ENCODE measurements at regions of chr10 and their contacts with region 1.

Region 1: DNA sequence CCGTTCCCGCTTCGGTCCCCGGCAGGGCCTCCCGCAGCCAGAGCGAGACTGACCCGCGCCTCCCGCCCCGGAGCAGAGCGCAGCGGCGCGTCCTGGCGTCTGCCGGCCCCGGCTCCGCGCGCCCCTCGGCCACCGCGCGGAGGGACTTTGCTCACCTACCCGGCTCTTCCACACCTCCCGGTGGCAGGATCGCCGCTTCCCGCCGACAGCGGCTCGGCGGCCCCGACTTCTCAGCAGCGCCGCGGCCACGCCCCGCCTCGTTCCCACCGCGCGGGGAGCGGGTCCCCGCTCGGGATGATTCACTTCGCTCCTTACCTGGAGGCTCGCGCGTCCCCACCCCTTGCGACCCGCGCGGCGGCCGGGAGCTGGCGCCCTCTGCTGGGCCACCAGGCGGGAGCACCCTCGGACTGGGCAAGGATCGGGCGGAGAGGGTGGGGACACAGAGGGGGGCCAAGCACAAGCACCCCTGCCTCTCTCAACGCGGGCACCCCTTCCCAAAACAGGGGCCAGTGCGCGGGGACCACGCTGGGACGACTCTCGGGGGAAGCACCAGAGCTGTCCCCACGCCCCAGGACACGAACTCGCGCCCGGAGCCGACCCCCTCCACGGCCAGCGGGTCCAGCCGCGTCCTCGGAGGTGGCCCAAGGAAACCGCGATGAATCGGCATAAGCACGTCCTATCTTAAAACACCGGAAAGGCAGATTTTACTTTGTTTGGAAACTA is 101.0 kb upstream of the SVIL start:
- DNase-seq: peak; percentile 63 to 89 (median 80)
- ATAC-seq: peak; percentile 80
- H3K4me3 ChIP-seq: peak overlapping the region; percentile 73
- H3K4me3 Mint-ChIP-seq: peak overlapping the region; percentile 94
- H3K27ac ChIP-seq: peak overlapping the region in 1 of 2 donors; percentile 56
- H3K27ac Mint-ChIP-seq: peak overlapping the region; percentile 81
- H3K4me1 ChIP-seq: peaks cover 33% of the 10 kb centered on the region
- H3K4me1 Mint-ChIP-seq: peaks cover 43% of the 10 kb centered on the region
- H3K27me3 ChIP-seq: no peaks in the 10 kb centered on the region
- H3K27me3 Mint-ChIP-seq: no peaks in the 10 kb centered on the region
- CTCF ChIP-seq: peak; percentile 94

Region 2: GRCh38 chr10:29517352-29517923 is 218.3 kb before region 1 on chr10:
- CTCF ChIA-PET with region 1: no interaction called
- POLR2A ChIA-PET with region 1: no interaction called
- intact Hi-C with region 1: loop called in 1 of 2 experiments (anchors 10 kb)
- DNase-seq: no peak
- ATAC-seq: no peak
- H3K4me3 ChIP-seq: no peak overlapping the region
- H3K4me3 Mint-ChIP-seq: no peak overlapping the region
- H3K27ac ChIP-seq: no peak overlapping the region
- H3K27ac Mint-ChIP-seq: no peak overlapping the region
- H3K4me1 ChIP-seq: no peaks in the 10 kb centered on the region
- H3K4me1 Mint-ChIP-seq: peaks cover 4% of the 10 kb centered on the region
- H3K27me3 ChIP-seq: no peaks in the 10 kb centered on the region
- H3K27me3 Mint-ChIP-seq: no peaks in the 10 kb centered on the region
- CTCF ChIP-seq: no peak

Region 3: DNA sequence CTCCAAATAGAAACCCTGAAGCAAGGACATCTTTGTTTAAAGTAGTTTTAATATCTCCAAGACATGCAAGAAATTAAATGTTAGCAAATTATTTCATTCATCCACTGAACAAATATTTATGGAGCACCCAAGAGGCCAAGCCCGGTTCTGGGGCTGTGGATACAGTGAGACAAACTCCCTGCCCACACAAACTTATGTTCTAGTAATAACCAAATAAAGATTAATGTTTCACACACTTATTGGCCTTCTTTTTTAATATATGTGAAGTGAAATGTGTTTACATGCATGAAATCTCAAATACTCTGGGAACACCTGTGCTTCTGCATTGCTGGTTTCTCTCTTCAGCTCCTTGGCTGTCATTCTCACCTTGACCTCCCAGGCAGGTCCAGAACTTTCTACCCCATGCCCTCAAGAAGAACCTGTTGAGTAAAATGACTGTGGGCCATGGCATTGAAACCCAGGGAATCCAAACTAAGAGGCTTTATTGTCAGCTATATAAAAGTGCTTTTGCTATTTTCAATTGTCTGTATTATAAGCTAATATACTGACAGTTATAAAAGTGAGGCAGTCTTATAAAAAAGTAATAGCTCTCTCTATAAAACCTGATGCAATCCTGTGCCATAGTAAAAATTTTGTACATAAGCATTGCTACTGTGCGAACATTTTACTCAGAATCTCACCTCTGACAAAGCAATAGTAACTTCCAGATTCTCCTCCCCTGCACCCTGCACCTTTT is 144.7 kb before region 1 on chr10:
- CTCF ChIA-PET with region 1: interaction called, 10 read pairs
- POLR2A ChIA-PET with region 1: interaction called, 3 read pairs
- intact Hi-C with region 1: loop called (anchors 2 kb)
- DNase-seq: no peak
- ATAC-seq: no peak
- H3K4me3 ChIP-seq: no peak overlapping the region
- H3K4me3 Mint-ChIP-seq: no peak overlapping the region
- H3K27ac ChIP-seq: no peak overlapping the region
- H3K27ac Mint-ChIP-seq: no peak overlapping the region
- H3K4me1 ChIP-seq: peaks cover 7% of the 10 kb centered on the region
- H3K4me1 Mint-ChIP-seq: peaks cover 25% of the 10 kb centered on the region
- H3K27me3 ChIP-seq: no peaks in the 10 kb centered on the region
- H3K27me3 Mint-ChIP-seq: no peaks in the 10 kb centered on the region
- CTCF ChIP-seq: peak; percentile 46

Region 4: GRCh38 chr10:29658984-29659965 is 76.5 kb before region 1 on chr10:
- CTCF ChIA-PET with region 1: interaction called, 8 read pairs
- POLR2A ChIA-PET with region 1: no interaction called
- intact Hi-C with region 1: loop called (anchors 1 to 5 kb)
- DNase-seq: peak; percentile 26 to 95 (median 46)
- ATAC-seq: peak; percentile 94
- H3K4me3 ChIP-seq: peak overlapping the region; percentile 1
- H3K4me3 Mint-ChIP-seq: peak overlapping the region; percentile 70
- H3K27ac ChIP-seq: peak overlapping the region; percentile 55 to 56
- H3K27ac Mint-ChIP-seq: peak overlapping the region; percentile 89
- H3K4me1 ChIP-seq: peaks cover 29% of the 10 kb centered on the region
- H3K4me1 Mint-ChIP-seq: peaks cover 44% of the 10 kb centered on the region
- H3K27me3 ChIP-seq: no peaks in the 10 kb centered on the region
- H3K27me3 Mint-ChIP-seq: no peaks in the 10 kb centered on the region
- CTCF ChIP-seq: peak; percentile 48

Region 5: DNA sequence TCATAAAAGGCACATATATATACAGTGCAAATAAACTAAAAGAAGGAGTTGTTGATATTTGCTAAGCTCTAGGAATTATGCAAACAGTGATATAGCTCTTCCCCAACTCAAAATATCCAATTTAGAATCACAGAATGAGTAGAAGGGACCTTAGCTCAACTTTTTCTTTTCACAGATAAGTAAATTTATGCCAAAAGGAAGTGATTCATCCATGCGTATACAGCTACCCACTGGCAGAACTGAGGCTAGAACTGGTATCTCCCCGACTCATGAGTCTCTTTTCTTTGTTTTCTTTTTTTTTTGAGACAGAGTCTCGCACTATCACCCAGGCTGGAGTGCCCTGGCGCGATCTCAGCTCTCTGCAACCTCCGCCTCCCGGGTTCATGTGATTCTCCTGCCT is 46.8 kb before region 1 on chr10:
- CTCF ChIA-PET with region 1: interaction called, 10 read pairs
- POLR2A ChIA-PET with region 1: interaction called, 16 read pairs
- intact Hi-C with region 1: loop called in 1 of 2 experiments (anchors 2 kb)
- DNase-seq: peak in 3 of 14 experiments; percentile 26 to 59 (median 38)
- ATAC-seq: peak; percentile 67
- H3K4me3 ChIP-seq: no peak overlapping the region
- H3K4me3 Mint-ChIP-seq: no peak overlapping the region
- H3K27ac ChIP-seq: no peak overlapping the region
- H3K27ac Mint-ChIP-seq: peak overlapping the region; percentile 68
- H3K4me1 ChIP-seq: peaks cover 17% of the 10 kb centered on the region
- H3K4me1 Mint-ChIP-seq: peaks cover 85% of the 10 kb centered on the region
- H3K27me3 ChIP-seq: no peaks in the 10 kb centered on the region
- H3K27me3 Mint-ChIP-seq: no peaks in the 10 kb centered on the region
- CTCF ChIP-seq: no peak

Measured in CD4-positive, alpha-beta T cell (primary cell).